GM12878 (cell line): ENCODE measurements at regions of chr12 and their contacts with region 1.

Region 1: GRCh38 chr12:53414756-53415417 is 8.8 kb upstream of the AMHR2 start:
- DNase-seq: no peak
- ATAC-seq: no peak
- H3K4me3 ChIP-seq: no peak overlapping the region
- H3K27ac ChIP-seq: no peak overlapping the region
- H3K4me1 ChIP-seq: peaks cover 18% of the 10 kb centered on the region
- H3K27me3 ChIP-seq: no peaks in the 10 kb centered on the region
- CTCF ChIP-seq: no peak
- EP300 ChIP-seq: no peak
- POLR2A ChIP-seq: no peak
- RAD21 ChIP-seq: no peak

Region 2: GRCh38 chr12:53391729-53392128 is 23.2 kb before region 1 on chr12:
- CTCF ChIA-PET with region 1: interaction called, 8 read pairs
- POLR2A ChIA-PET with region 1: interaction called, 9 read pairs
- RAD21 ChIA-PET with region 1: interaction called, 11 read pairs
- SMC1A ChIA-PET with region 1: interaction called, 14 read pairs
- in situ Hi-C with region 1: no loop called
- intact Hi-C with region 1: no loop called
- DNase-seq: no peak
- ATAC-seq: no peak
- H3K4me3 ChIP-seq: no peak overlapping the region
- H3K27ac ChIP-seq: no peak overlapping the region
- H3K4me1 ChIP-seq: no peaks in the 10 kb centered on the region
- H3K27me3 ChIP-seq: no peaks in the 10 kb centered on the region
- CTCF ChIP-seq: no peak
- EP300 ChIP-seq: no peak
- POLR2A ChIP-seq: no peak
- RAD21 ChIP-seq: no peak